ENCODE measurements at regions of chr3 and their contacts with region 1.

Region 1: GRCh38 chr3:197186887-197187588 is 111.4 kb downstream of the DLG1 start:
- DNase-seq: peak; percentile 40
- CTCF ChIP-seq: peak; percentile 78

Region 2: GRCh38 chr3:197029511-197030167 is 157.4 kb before region 1 on chr3 and contains the start of gene MELTF:
- CTCF ChIA-PET with region 1: interaction called, 26 read pairs
- POLR2A ChIA-PET with region 1: no interaction called
- DNase-seq: peak; percentile 98
- CTCF ChIP-seq: peak; percentile 73

Region 3: GRCh38 chr3:197203714-197204146 is 16.7 kb after region 1 on chr3:
- CTCF ChIA-PET with region 1: interaction called, 10 read pairs
- POLR2A ChIA-PET with region 1: no interaction called
- DNase-seq: no peak
- CTCF ChIP-seq: no peak

Region 4: DNA sequence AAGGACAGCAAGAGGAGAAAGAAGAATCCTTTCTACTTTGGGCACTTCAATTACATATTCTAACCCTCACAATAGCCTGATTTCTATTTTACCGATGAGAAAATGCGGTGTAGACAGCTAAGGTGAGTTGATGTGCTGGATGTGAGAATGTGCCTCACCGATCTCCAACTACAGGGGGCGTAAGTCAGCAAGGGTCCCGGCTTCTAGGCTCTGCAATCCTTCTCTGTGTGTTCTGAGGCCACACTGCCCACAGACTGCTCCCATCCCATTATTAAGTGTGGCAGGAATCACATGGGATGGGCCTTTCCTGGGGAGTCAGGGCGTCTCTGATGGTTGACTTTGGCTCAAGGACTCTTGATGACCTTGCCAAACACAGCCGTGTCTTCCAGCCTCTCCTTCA is 739.4 kb after region 1 on chr3:
- CTCF ChIA-PET with region 1: no interaction called
- POLR2A ChIA-PET with region 1: no interaction called
- DNase-seq: no peak
- CTCF ChIP-seq: no peak